Activated T-helper 2 cell treated with anti-CD3 and anti-CD28 coated beads, Interferon-gamma antibody, Interleukin-2, Interleukin-4, amounts not matched to agents 10 μg/mL and 5 μg/mL and 100 μg/mL, durations not matched to agents 14 hours and 24 hours and 36 hours (primary cell): ENCODE measurements at regions of chr4 and their contacts with region 1.

Region 1: DNA sequence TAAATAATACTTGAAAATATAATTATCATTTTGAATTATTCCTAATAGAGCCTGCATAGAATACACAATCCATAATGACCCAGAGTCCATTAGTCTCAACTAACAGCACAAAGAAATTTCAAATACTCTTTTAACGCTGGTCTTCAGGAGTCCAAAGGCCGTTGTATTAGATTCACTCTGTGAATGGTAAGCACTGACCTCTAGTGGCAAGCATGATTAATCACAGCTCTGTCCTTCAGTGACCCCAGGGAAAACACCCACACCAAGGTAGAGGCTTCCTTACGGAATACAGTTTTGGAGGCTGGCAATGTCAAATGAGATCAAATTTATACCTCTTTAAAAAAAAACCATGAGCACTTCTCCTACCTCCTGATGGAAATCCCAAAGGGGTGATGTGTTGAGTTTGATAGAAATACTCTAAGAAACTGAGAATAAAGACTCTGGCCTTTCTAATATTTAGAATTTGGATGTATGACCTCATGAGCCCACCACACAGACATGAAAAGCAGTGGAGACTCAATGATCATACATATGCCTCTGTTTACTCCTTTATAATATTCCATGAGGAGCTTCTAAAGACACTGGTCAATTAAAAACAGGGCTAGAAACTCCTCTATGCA is 147.2 kb upstream of the DKK2 start:
- DNase-seq: no peak
- H3K4me3 Mint-ChIP-seq: no peak overlapping the region
- H3K27ac Mint-ChIP-seq: no peak overlapping the region
- H3K4me1 Mint-ChIP-seq: no peaks in the 10 kb centered on the region
- H3K27me3 Mint-ChIP-seq: no peaks in the 10 kb centered on the region

Region 2: GRCh38 chr4:107037199-107037584 is 146.1 kb before region 1 on chr4:
- intact Hi-C with region 1: loop called (anchors 10 kb)
- DNase-seq: no peak
- H3K4me3 Mint-ChIP-seq: no peak overlapping the region
- H3K27ac Mint-ChIP-seq: no peak overlapping the region
- H3K4me1 Mint-ChIP-seq: peaks cover 27% of the 10 kb centered on the region
- H3K27me3 Mint-ChIP-seq: peaks cover 57% of the 10 kb centered on the region

Region 3: DNA sequence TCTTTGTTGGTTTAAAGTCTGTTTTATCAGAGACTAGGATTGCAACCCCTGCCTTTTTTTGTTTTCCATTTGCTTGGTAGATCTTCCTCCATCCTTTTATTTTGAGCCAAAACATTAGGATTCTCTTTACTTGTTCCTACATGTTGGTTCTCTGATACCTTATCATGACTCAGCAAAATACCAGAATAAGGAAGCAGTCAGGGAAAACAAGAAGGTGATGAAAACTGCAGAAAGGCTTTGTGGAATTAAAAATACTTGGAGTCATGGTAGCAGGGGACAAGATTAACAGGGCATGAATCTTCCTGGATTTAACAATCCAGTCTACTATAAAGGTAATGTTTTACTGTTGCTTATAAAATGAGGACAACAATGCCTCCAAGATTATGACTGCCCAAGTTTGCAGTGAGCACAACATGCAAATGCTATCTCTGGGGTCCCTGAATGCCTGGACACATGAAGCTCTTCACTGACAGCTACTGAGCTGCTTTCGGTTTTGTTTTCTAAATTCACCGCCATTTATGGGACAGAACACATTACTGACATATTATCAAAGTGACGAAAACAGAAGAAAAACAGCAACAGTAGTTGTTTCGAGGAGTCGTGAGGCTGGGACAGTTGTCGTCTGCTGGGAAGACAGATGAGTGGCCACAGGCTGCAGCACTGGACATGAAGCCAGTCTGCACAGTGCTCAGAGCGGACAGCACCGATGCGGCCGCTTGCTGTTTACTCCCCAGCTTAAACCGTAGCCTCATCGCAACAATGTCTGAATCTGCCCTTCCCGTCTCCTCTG is 27.4 kb after region 1 on chr4:
- intact Hi-C with region 1: no loop called
- DNase-seq: no peak
- H3K4me3 Mint-ChIP-seq: no peak overlapping the region
- H3K27ac Mint-ChIP-seq: no peak overlapping the region
- H3K4me1 Mint-ChIP-seq: no peaks in the 10 kb centered on the region
- H3K27me3 Mint-ChIP-seq: no peaks in the 10 kb centered on the region